T-cell (primary cell): ENCODE measurements at regions of chr1 and their contacts with region 1.

Region 1: GRCh38 chr1:2561898-2562545 is 5.9 kb downstream of the TNFRSF14 start:
- DNase-seq: peak in 2 of 35 experiments; percentile 30 to 46
- ATAC-seq: peak in 3 of 4 experiments; percentile 46 to 61 (median 55)
- H3K4me3 ChIP-seq: no peak overlapping the region
- H3K4me3 Mint-ChIP-seq: no peak overlapping the region
- H3K27ac ChIP-seq: no peak overlapping the region
- H3K27ac Mint-ChIP-seq: no peak overlapping the region
- H3K4me1 ChIP-seq: peaks cover 7 to 46% of the 10 kb centered on the region in 2 experiments
- H3K4me1 Mint-ChIP-seq: peaks cover 22 to 30% (median 24%) of the 10 kb centered on the region in 3 donors
- H3K27me3 ChIP-seq: no peaks in the 10 kb centered on the region
- H3K27me3 Mint-ChIP-seq: no peaks in the 10 kb centered on the region

Region 2: GRCh38 chr1:2586154-2587070 is 24.4 kb after region 1 on chr1 and contains the start of gene PRXL2B:
- CTCF ChIA-PET with region 1: interaction called in 1 of 2 experiments, 10 read pairs
- POLR2A ChIA-PET with region 1: no interaction called
- DNase-seq: peak; percentile 86 to 98 (median 93)
- ATAC-seq: peak; percentile 74 to 79 (median 76)
- H3K4me3 ChIP-seq: peak within 1 kb of the TSS; percentile 61 to 82
- H3K4me3 Mint-ChIP-seq: peak within 1 kb of the TSS; percentile 83 to 89 (median 88)
- H3K27ac ChIP-seq: peak within 1 kb of the TSS; percentile 96
- H3K27ac Mint-ChIP-seq: peak within 1 kb of the TSS; percentile 96 to 97
- H3K4me1 ChIP-seq: peaks cover 21 to 61% of the 10 kb centered on the region in 2 experiments
- H3K4me1 Mint-ChIP-seq: peaks cover 37 to 42% (median 39%) of the 10 kb centered on the region in 3 donors
- H3K27me3 ChIP-seq: peaks cover 0 to 2% of the 10 kb centered on the region in 2 experiments
- H3K27me3 Mint-ChIP-seq: no peaks in the 10 kb centered on the region
- total RNA-seq, gene PRXL2B: 17.3 to 37.6 (median 35.3) TPM